PC-3 (cell line): ENCODE measurements at regions of chr7 and their contacts with region 1.

Region 1: DNA sequence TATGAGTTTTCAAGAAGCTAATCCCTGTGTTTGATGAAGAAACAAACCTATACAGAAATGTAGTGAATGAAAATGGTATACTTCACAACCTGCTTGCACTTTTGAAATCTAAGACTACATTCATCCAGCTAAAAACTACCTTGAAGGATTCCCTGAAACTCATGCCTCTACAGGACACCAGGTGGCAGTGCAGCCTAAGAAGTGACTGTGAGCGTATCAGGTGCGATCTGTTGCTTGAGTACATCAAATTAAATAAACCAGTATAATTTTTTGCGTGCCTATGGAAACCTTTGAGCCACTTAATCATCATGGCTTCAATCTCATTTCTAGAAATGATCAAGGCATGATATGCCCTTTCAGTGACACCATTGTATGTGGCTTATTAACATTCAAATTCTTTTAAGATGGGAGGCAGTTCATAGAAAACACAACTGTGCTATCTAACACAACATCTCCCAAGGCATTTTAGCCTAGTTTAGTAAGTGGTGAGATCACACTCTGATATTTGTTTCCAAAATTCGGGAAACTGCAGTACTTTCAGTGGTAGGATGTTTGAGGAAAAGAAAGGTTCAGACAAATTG is 57.4 kb downstream of the PPP1R17 start:
- DNase-seq: peak; percentile 85
- ATAC-seq: peak; percentile 73
- H3K4me3 ChIP-seq: no peak overlapping the region
- H3K27ac ChIP-seq: no peak overlapping the region
- H3K4me1 ChIP-seq: peaks cover 25% of the 10 kb centered on the region
- H3K27me3 ChIP-seq: no peaks in the 10 kb centered on the region
- CTCF ChIP-seq: peak; percentile 94

Region 2: DNA sequence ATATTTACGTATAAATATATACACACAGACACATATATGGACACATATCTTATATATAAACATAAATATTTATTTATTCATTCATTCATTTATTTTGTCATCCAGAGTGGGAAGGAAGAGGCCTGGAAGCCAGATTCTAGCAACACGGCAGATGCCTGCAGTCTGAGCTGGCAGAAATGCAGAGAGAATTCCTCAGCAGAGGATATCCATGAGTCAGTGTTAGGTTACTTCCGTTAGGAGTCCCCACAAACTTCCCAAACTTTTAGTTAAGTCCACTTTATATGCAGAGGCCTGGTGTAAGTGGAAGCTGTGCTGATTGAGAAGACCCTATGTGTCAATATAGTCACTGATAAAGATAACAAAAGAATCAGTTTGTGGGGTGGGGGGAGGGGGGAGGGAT is 32.2 kb after region 1 on chr7:
- CTCF ChIA-PET with region 1: no interaction called
- POLR2A ChIA-PET with region 1: no interaction called
- intact Hi-C with region 1: loop called (anchors 2 kb)
- DNase-seq: peak; percentile 89
- ATAC-seq: peak; percentile 98
- H3K4me3 ChIP-seq: no peak overlapping the region
- H3K27ac ChIP-seq: no peak overlapping the region
- H3K4me1 ChIP-seq: peaks cover 16% of the 10 kb centered on the region
- H3K27me3 ChIP-seq: no peaks in the 10 kb centered on the region
- CTCF ChIP-seq: no peak

Region 3: GRCh38 chr7:31910191-31910590 is 165.8 kb after region 1 on chr7:
- CTCF ChIA-PET with region 1: no interaction called
- POLR2A ChIA-PET with region 1: no interaction called
- intact Hi-C with region 1: no loop called
- DNase-seq: no peak
- ATAC-seq: no peak
- H3K4me3 ChIP-seq: no peak overlapping the region
- H3K27ac ChIP-seq: no peak overlapping the region
- H3K4me1 ChIP-seq: no peaks in the 10 kb centered on the region
- H3K27me3 ChIP-seq: no peaks in the 10 kb centered on the region
- CTCF ChIP-seq: no peak

Region 4: GRCh38 chr7:32043714-32044113 is 299.3 kb after region 1 on chr7:
- CTCF ChIA-PET with region 1: no interaction called
- POLR2A ChIA-PET with region 1: no interaction called
- intact Hi-C with region 1: loop called (anchors 1 kb)
- DNase-seq: peak; percentile 83
- ATAC-seq: peak; percentile 72
- H3K4me3 ChIP-seq: peak overlapping the region; percentile 8; the same call in 1 of the 2 replicates
- H3K27ac ChIP-seq: peak overlapping the region; percentile 93
- H3K4me1 ChIP-seq: peaks cover 66% of the 10 kb centered on the region
- H3K27me3 ChIP-seq: no peaks in the 10 kb centered on the region
- CTCF ChIP-seq: no peak

Region 5: GRCh38 chr7:32164346-32164957 is 420.1 kb after region 1 on chr7:
- CTCF ChIA-PET with region 1: interaction called, 3 read pairs
- POLR2A ChIA-PET with region 1: no interaction called
- intact Hi-C with region 1: loop called (anchors 1 kb)
- DNase-seq: peak; percentile 85
- ATAC-seq: peak; percentile 53
- H3K4me3 ChIP-seq: no peak overlapping the region
- H3K27ac ChIP-seq: peak overlapping the region; percentile 87; the same call in 1 of the 2 replicates
- H3K4me1 ChIP-seq: peaks cover 39% of the 10 kb centered on the region
- H3K27me3 ChIP-seq: no peaks in the 10 kb centered on the region
- CTCF ChIP-seq: peak; percentile 84

Region 6: GRCh38 chr7:32347244-32347828 is 603.0 kb after region 1 on chr7:
- CTCF ChIA-PET with region 1: interaction called, 4 read pairs
- POLR2A ChIA-PET with region 1: no interaction called
- intact Hi-C with region 1: loop called (anchors 2 kb)
- DNase-seq: peak; percentile 40
- ATAC-seq: no peak
- H3K4me3 ChIP-seq: no peak overlapping the region
- H3K27ac ChIP-seq: no peak overlapping the region
- H3K4me1 ChIP-seq: no peaks in the 10 kb centered on the region
- H3K27me3 ChIP-seq: peaks cover 17% of the 10 kb centered on the region
- CTCF ChIP-seq: peak; percentile 83

Region 7: DNA sequence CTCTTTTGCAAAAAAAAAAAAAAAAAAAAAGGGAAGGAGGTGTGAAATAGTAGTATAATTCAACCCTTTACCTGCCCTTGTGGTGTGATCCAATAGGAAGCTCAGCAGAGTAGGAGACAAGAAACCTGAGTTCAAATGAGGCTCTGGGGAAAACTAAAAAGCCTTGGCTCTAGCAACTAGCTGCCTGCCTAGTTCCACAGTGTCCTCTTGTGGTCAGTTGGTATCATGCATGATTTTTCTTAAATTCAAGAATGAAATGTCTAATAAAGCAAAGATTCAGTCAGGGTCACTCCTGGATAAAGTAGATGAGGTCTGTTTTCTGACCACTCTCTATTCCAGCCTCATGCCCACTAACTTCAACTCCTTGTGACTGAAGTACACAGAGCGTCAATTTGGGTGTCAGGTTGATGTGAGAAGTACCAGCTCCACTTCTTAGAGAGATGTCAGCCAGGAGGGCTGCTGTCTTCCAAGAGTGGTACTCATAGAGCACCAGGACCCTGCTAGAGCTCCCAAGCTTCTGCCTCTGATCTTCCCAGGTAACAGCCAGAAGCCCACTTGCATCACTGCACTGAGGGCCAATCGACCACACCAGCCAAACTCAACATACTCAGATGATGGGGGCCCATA is 735.3 kb after region 1 on chr7:
- CTCF ChIA-PET with region 1: no interaction called
- POLR2A ChIA-PET with region 1: no interaction called
- intact Hi-C with region 1: loop called (anchors 1 kb)
- DNase-seq: peak; percentile 68
- ATAC-seq: peak; percentile 34; the same call in 1 of the 2 replicates
- H3K4me3 ChIP-seq: no peak overlapping the region
- H3K27ac ChIP-seq: no peak overlapping the region
- H3K4me1 ChIP-seq: peaks cover 10% of the 10 kb centered on the region
- H3K27me3 ChIP-seq: no peaks in the 10 kb centered on the region
- CTCF ChIP-seq: peak; percentile 89